Activated CD4-positive, alpha-beta memory T cell treated with anti-CD3 and anti-CD28 coated beads, Interleukin-2, amount 10 ng/mL, durations not matched to agents 7 days and 5 days (primary cell): ENCODE measurements at regions of chr2 and their contacts with region 1.

Region 1: DNA sequence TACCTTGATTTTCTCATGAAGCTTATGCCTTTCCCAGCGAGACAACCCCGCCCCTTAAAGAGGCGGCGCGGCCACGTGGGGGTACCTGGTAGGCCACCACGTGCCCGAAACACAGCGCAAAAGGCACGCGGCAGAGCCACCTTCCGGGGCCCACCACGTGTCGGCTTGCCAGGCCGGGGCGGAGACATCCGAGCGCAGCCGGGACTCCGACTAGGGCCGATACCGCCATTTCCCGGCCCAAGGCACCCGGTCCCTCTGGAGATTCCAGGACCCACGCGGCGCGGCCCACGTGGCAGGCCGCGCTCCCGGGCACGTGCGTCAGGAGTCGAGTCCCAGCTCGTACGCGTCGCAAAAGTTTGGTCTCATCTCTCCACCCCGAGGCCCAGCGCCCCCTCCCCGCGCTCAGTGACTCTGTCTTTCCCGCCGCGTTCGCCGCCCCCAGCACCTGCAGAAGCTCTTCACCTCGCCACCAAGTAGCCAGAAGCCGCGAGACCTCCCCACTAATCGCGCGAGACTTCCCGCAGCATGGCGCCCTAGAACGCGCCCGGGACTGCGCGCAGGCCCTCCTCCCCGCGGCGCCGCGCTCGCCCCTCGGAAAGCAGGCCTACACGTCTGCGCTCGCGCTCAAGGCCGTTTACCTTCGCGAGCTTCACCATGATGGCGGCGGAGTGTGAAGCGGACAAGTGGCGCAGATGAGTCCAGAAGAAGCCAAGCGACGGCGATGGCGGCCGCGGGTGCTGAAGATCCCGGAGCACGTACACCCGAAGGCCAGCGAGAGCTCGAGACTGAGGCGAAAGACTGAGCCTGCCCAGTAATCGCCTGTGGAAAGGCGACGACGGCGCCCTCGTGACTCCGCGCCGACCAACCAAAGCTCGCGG is at the start of gene NCL:
- DNase-seq: peak; percentile 90
- H3K4me3 Mint-ChIP-seq: peak within 1 kb of the TSS; percentile 99
- H3K27ac Mint-ChIP-seq: peak within 1 kb of the TSS; percentile 99
- H3K4me1 Mint-ChIP-seq: peaks cover 51% of the 10 kb centered on the region
- H3K27me3 Mint-ChIP-seq: no peaks in the 10 kb centered on the region
- total RNA-seq, gene NCL: 454 to 476 TPM

Region 2: GRCh38 chr2:231425811-231426728 is 37.9 kb before region 1 on chr2:
- CTCF ChIA-PET with region 1: no interaction called
- POLR2A ChIA-PET with region 1: interaction called, 16 read pairs
- DNase-seq: peak; percentile 69
- H3K4me3 Mint-ChIP-seq: peak overlapping the region; percentile 45
- H3K27ac Mint-ChIP-seq: peak overlapping the region; percentile 84
- H3K4me1 Mint-ChIP-seq: peaks cover 21% of the 10 kb centered on the region
- H3K27me3 Mint-ChIP-seq: peaks cover 2% of the 10 kb centered on the region

Region 3: GRCh38 chr2:231436957-231437356 is 27.0 kb before region 1 on chr2:
- CTCF ChIA-PET with region 1: no interaction called
- POLR2A ChIA-PET with region 1: no interaction called
- DNase-seq: no peak
- H3K4me3 Mint-ChIP-seq: no peak overlapping the region
- H3K27ac Mint-ChIP-seq: no peak overlapping the region
- H3K4me1 Mint-ChIP-seq: peaks cover 6% of the 10 kb centered on the region
- H3K27me3 Mint-ChIP-seq: peaks cover 1% of the 10 kb centered on the region

Region 4: GRCh38 chr2:231482806-231483391 is 19.0 kb after region 1 on chr2:
- CTCF ChIA-PET with region 1: interaction called, 95 read pairs
- POLR2A ChIA-PET with region 1: interaction called, 245 read pairs
- DNase-seq: peak; percentile 78
- H3K4me3 Mint-ChIP-seq: peak overlapping the region; percentile 76
- H3K27ac Mint-ChIP-seq: peak overlapping the region; percentile 83
- H3K4me1 Mint-ChIP-seq: peaks cover 23% of the 10 kb centered on the region
- H3K27me3 Mint-ChIP-seq: no peaks in the 10 kb centered on the region

Region 5: DNA sequence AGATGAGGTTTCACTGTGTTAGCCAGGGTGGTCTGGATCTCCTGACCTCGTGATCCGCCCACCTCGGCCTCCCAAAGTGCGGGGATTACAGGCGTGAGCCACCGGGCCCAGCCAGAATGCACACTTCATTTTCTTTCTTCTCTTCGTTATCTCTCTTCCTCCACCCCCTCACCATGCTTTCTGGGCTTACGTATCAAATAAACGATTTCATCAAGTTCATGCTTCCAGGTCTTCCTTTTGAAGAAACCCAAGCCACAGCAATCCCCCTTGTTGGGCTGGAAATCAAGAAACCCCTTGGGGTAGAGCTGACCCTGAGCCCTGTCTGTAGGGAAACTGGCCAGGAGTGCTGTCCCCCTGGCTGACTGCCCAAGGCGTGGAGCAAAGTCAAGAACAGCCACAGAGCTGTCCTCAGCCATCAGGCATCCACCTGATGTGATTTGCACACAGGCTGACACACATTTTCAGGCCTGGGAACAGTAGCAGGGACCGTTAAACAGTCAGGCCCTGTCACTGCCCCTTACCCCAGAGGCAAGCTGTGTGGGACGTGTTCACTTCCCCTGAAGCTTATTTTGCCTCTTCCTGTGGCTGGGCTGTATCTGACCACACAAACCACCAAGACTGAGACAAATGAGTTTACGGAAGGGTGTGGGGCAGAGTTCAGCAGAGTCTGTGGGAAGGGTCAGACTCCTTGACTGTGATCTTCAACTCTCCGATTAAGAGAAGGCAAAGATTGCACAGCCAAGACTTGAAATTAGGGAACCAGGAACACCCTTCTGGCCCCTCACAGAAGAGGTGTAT is 81.4 kb after region 1 on chr2:
- CTCF ChIA-PET with region 1: no interaction called
- POLR2A ChIA-PET with region 1: interaction called, 13 read pairs
- DNase-seq: peak; percentile 90
- H3K4me3 Mint-ChIP-seq: peak overlapping the region; percentile 56
- H3K27ac Mint-ChIP-seq: peak overlapping the region; percentile 99
- H3K4me1 Mint-ChIP-seq: peaks cover 69% of the 10 kb centered on the region
- H3K27me3 Mint-ChIP-seq: peaks cover 10% of the 10 kb centered on the region

Region 6: GRCh38 chr2:231612179-231613053 is 148.5 kb after region 1 on chr2:
- CTCF ChIA-PET with region 1: interaction called, 5 read pairs
- POLR2A ChIA-PET with region 1: interaction called, 41 read pairs
- DNase-seq: peak; percentile 95
- H3K4me3 Mint-ChIP-seq: peak overlapping the region; percentile 73
- H3K27ac Mint-ChIP-seq: peak overlapping the region; percentile 88
- H3K4me1 Mint-ChIP-seq: peaks cover 38% of the 10 kb centered on the region
- H3K27me3 Mint-ChIP-seq: no peaks in the 10 kb centered on the region

Region 7: DNA sequence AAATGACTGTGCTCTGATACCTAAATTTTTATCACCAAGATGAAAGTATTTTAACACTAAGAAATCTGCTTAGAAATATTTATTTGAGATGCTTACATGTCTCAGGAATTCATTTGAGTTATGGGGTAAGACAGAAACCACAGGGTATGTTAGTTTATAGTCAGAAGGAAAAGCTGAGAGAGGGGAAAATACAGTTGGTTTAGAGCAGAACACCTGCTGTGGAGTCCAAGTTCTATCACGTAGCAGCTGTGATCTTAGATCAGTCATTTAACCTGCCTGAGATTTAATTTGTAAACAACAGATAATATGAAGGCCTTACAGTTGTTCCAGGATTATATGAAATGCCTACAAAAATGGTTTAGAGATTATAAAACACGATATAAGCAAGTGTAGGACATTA is 288.1 kb after region 1 on chr2:
- CTCF ChIA-PET with region 1: no interaction called
- POLR2A ChIA-PET with region 1: no interaction called
- DNase-seq: no peak
- H3K4me3 Mint-ChIP-seq: no peak overlapping the region
- H3K27ac Mint-ChIP-seq: no peak overlapping the region
- H3K4me1 Mint-ChIP-seq: no peaks in the 10 kb centered on the region
- H3K27me3 Mint-ChIP-seq: no peaks in the 10 kb centered on the region